ENCODE measurements at regions of chr2 and their contacts with region 1.

Region 1: GRCh38 chr2:238370823-238371372 is 50.6 kb downstream of the TRAF3IP1 start:
- DNase-seq: peak in 8 of 9 donors; percentile 27 to 58 (median 44)
- ATAC-seq: peak; percentile 89
- H3K4me3 ChIP-seq: no peak overlapping the region
- H3K4me3 Mint-ChIP-seq: peak overlapping the region in 1 of 10 donors; percentile 13
- H3K27ac ChIP-seq: no peak overlapping the region
- H3K27ac Mint-ChIP-seq: peak overlapping the region in 1 of 9 donors; percentile 53
- H3K4me1 ChIP-seq: no peaks in the 10 kb centered on the region
- H3K4me1 Mint-ChIP-seq: peaks cover 0 to 11% (median 7%) of the 10 kb centered on the region in 7 donors
- H3K27me3 ChIP-seq: no peaks in the 10 kb centered on the region
- H3K27me3 Mint-ChIP-seq: peaks cover 0 to 18% (median 0%) of the 10 kb centered on the region in 5 donors

Region 2: GRCh38 chr2:238426568-238427434 is 55.9 kb after region 1 on chr2 and contains the start of gene ASB1:
- CTCF ChIA-PET with region 1: no interaction called
- POLR2A ChIA-PET with region 1: no interaction called
- intact Hi-C with region 1: loop called in 1 of 2 experiments (anchors 5 kb)
- DNase-seq: peak; percentile 62 to 89 (median 72)
- ATAC-seq: peak; percentile 87
- H3K4me3 ChIP-seq: peak within 1 kb of the TSS; percentile 90
- H3K4me3 Mint-ChIP-seq: peak within 1 kb of the TSS; percentile 90 to 97 (median 92)
- H3K27ac ChIP-seq: peak within 1 kb of the TSS; percentile 80
- H3K27ac Mint-ChIP-seq: peak within 1 kb of the TSS; percentile 87 to 95 (median 93)
- H3K4me1 ChIP-seq: peaks cover 3 to 15% of the 10 kb centered on the region in 2 donors
- H3K4me1 Mint-ChIP-seq: peaks cover 28 to 53% (median 49%) of the 10 kb centered on the region in 7 donors
- H3K27me3 ChIP-seq: no peaks in the 10 kb centered on the region
- H3K27me3 Mint-ChIP-seq: no peaks in the 10 kb centered on the region
- total RNA-seq, gene ASB1: 25.0 to 55.2 (median 33.1) TPM

Region 3: GRCh38 chr2:238462782-238463396 is 92.0 kb after region 1 on chr2:
- CTCF ChIA-PET with region 1: interaction called, 13 read pairs
- POLR2A ChIA-PET with region 1: no interaction called
- intact Hi-C with region 1: loop called (anchors 1 kb)
- DNase-seq: peak in 6 of 9 donors; percentile 16 to 67 (median 58)
- ATAC-seq: peak; percentile 76
- H3K4me3 ChIP-seq: no peak overlapping the region
- H3K4me3 Mint-ChIP-seq: no peak overlapping the region
- H3K27ac ChIP-seq: no peak overlapping the region
- H3K27ac Mint-ChIP-seq: no peak overlapping the region
- H3K4me1 ChIP-seq: no peaks in the 10 kb centered on the region
- H3K4me1 Mint-ChIP-seq: peaks cover 0 to 6% (median 0%) of the 10 kb centered on the region in 7 donors
- H3K27me3 ChIP-seq: no peaks in the 10 kb centered on the region
- H3K27me3 Mint-ChIP-seq: peaks cover 0 to 10% (median 0%) of the 10 kb centered on the region in 5 donors

Region 4: GRCh38 chr2:238573065-238573778 is 202.3 kb after region 1 on chr2:
- CTCF ChIA-PET with region 1: no interaction called
- POLR2A ChIA-PET with region 1: no interaction called
- intact Hi-C with region 1: loop called in 1 of 2 experiments (anchors 2 kb)
- DNase-seq: peak in 2 of 9 donors; percentile 7 to 12
- ATAC-seq: peak; percentile 39
- H3K4me3 ChIP-seq: no peak overlapping the region
- H3K4me3 Mint-ChIP-seq: no peak overlapping the region
- H3K27ac ChIP-seq: no peak overlapping the region
- H3K27ac Mint-ChIP-seq: no peak overlapping the region
- H3K4me1 ChIP-seq: no peaks in the 10 kb centered on the region
- H3K4me1 Mint-ChIP-seq: no peaks in the 10 kb centered on the region
- H3K27me3 ChIP-seq: no peaks in the 10 kb centered on the region
- H3K27me3 Mint-ChIP-seq: peaks cover 0 to 6% (median 0%) of the 10 kb centered on the region in 5 donors

Region 5: DNA sequence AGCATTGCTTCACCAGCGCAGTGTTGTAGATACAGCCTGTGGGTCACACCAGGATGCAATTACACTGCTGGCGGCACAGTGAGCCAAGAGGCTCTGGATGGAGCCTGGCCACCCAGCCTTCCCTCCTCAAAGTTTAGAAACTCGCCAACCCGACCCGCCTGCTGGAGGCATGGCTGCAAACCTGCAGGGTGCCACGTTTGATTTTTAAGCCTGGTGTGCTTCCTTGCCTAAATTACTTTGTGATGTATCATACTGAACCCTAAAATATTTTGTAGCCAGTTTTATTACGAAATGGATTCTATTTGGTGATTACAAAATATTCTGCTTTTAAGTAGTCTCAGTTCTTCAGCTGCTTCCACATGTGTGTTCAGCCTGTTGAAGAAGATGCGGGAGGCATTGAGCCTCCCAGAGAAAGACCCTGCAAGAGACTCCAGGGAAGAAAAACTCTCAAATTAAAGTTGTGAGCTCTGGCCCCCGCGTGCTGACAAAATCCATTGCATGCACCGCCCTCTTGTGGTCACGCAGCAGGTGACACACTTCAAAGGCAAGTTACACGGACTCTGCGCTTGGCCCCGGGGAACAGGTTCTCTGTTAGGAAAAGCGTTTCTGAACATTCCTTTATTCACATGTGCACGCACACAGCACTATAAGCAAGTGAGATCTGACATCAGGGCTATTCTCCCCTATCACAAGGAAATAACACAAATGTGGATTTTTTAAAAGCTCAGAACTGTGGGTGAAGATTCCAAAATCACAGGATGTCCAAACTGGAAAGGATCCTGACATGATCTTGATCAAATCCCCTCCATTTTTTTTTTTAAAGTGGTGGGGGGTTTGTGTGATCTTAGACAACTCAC is 414.0 kb after region 1 on chr2:
- CTCF ChIA-PET with region 1: interaction called, 15 read pairs
- POLR2A ChIA-PET with region 1: no interaction called
- intact Hi-C with region 1: no loop called
- DNase-seq: peak in 7 of 9 donors; percentile 25 to 53 (median 38)
- ATAC-seq: peak; percentile 46
- H3K4me3 ChIP-seq: no peak overlapping the region
- H3K4me3 Mint-ChIP-seq: no peak overlapping the region
- H3K27ac ChIP-seq: no peak overlapping the region
- H3K27ac Mint-ChIP-seq: no peak overlapping the region
- H3K4me1 ChIP-seq: no peaks in the 10 kb centered on the region
- H3K4me1 Mint-ChIP-seq: peaks cover 0 to 2% (median 0%) of the 10 kb centered on the region in 7 donors
- H3K27me3 ChIP-seq: no peaks in the 10 kb centered on the region
- H3K27me3 Mint-ChIP-seq: peaks cover 6 to 31% (median 14%) of the 10 kb centered on the region in 5 donors

Region 6: GRCh38 chr2:238970553-238971081 is 599.7 kb after region 1 on chr2:
- CTCF ChIA-PET with region 1: no interaction called
- POLR2A ChIA-PET with region 1: no interaction called
- intact Hi-C with region 1: loop called in 1 of 2 experiments (anchors 2 kb)
- DNase-seq: peak in 7 of 9 donors; percentile 14 to 53 (median 33)
- ATAC-seq: peak; percentile 76
- H3K4me3 ChIP-seq: no peak overlapping the region
- H3K4me3 Mint-ChIP-seq: no peak overlapping the region
- H3K27ac ChIP-seq: no peak overlapping the region
- H3K27ac Mint-ChIP-seq: no peak overlapping the region
- H3K4me1 ChIP-seq: no peaks in the 10 kb centered on the region
- H3K4me1 Mint-ChIP-seq: peaks cover 0 to 2% (median 0%) of the 10 kb centered on the region in 7 donors
- H3K27me3 ChIP-seq: no peaks in the 10 kb centered on the region
- H3K27me3 Mint-ChIP-seq: peaks cover 10 to 48% (median 30%) of the 10 kb centered on the region in 5 donors